CD8-positive, alpha-beta T cell (primary cell): ENCODE measurements at regions of chr15 and their contacts with region 1.

Region 1: GRCh38 chr15:81400640-81401236 is 26.7 kb upstream of the TMC3 start:
- DNase-seq: peak in 3 of 9 experiments; percentile 17 to 73 (median 65)
- ATAC-seq: peak; percentile 62
- H3K4me3 ChIP-seq: no peak overlapping the region
- H3K4me3 Mint-ChIP-seq: no peak overlapping the region
- H3K27ac ChIP-seq: no peak overlapping the region
- H3K27ac Mint-ChIP-seq: no peak overlapping the region
- H3K4me1 ChIP-seq: no peaks in the 10 kb centered on the region
- H3K4me1 Mint-ChIP-seq: peaks cover 2% of the 10 kb centered on the region
- H3K27me3 ChIP-seq: no peaks in the 10 kb centered on the region
- H3K27me3 Mint-ChIP-seq: no peaks in the 10 kb centered on the region
- CTCF ChIP-seq: peak; percentile 78

Region 2: DNA sequence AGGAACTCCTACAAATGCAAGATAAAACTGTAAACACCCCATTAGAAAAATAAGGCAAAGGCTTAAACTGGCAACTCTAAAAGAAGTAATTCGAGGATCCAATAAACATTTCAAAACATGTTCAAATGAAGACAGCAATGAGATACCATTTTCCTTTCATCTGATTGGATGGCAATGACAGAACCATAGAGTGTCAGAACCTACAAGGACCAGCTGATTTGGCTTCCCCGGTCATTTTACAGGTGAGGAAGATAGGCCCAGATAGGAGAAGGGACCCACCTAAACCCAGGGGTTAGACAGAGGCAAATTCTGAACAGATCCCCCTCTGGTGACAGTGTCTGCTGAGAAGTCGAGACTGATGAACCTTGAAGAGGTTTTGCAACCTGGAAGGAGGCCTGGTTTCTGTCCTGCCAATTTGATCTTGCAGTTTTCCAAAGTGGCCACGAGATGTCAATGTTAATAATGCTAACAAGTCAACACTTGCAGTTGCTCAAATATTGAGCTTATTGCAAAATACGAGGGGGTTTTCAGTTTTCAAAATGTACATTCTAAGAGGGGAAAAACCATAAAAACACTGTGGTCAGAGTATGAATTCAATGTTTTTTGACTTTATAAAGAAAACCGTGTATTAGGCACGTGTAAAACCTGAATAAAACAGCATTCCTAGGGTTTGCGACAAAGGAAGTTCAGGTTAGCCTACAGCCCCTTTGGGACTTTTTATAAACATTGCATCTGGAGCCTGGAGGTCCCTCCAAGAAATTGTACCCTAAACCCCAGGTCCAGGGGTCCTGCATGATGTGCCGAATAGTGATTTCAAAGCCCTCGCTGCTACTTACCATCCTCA is 245.1 kb before region 1 on chr15:
- CTCF ChIA-PET with region 1: interaction called, 11 read pairs
- POLR2A ChIA-PET with region 1: no interaction called
- intact Hi-C with region 1: loop called (anchors 1 to 5 kb)
- DNase-seq: peak in 4 of 9 experiments; percentile 11 to 50 (median 42)
- ATAC-seq: no peak
- H3K4me3 ChIP-seq: no peak overlapping the region
- H3K4me3 Mint-ChIP-seq: no peak overlapping the region
- H3K27ac ChIP-seq: no peak overlapping the region
- H3K27ac Mint-ChIP-seq: no peak overlapping the region
- H3K4me1 ChIP-seq: no peaks in the 10 kb centered on the region
- H3K4me1 Mint-ChIP-seq: no peaks in the 10 kb centered on the region
- H3K27me3 ChIP-seq: no peaks in the 10 kb centered on the region
- H3K27me3 Mint-ChIP-seq: peaks cover 4% of the 10 kb centered on the region
- CTCF ChIP-seq: peak; percentile 40

Region 3: DNA sequence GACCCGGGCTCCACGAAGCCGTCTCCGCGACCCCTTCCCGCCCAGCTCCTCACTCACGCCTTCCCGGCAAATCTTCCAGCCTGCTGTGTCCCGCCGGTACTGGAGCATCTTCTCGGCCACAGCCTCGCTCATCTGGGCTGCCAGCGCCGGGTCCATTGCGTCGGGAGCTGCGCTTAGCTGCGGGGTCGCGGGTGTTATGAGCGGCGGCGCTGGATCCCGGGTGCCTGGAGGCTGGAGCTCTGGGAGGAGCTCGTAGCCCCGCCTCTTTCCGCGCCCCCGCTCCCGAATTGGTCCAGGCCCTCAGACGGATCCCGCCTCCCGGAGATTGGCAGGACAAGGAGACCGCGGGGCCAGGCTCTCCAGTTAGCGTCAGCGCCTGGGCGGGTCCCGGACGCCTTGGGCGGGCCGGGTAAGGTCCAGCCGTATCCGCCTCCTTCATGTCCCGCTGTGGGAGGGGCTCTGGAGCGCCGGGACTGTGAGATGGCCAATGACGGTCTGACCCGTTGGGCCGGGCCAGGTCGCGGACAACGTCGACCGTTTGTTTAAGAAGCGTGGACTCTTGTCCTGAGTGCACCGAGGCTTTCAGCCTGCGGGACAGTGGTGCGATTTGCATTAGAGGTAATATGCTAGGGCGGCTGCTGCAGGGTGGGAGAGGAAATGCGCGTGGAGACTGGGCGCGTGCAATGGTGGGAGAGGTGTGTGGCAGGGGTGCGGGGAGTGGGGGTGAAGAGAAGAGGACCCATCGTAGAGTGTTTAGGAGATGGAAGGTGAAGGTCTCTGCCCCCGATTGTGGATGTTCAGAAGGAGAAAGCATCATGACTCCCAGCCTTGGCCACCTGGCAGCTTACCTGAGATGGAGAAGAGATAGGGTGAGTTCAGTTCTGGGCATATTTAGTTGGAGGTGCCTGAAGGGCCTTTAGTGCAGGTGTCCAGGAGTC is 76.5 kb before region 1 on chr15 and contains the start of gene STARD5:
- CTCF ChIA-PET with region 1: interaction called, 12 read pairs
- POLR2A ChIA-PET with region 1: no interaction called
- intact Hi-C with region 1: loop called (anchors 5 kb)
- DNase-seq: peak; percentile 85 to 97 (median 96)
- ATAC-seq: peak; percentile 96
- H3K4me3 ChIP-seq: peak within 1 kb of the TSS; percentile 82 to 93
- H3K4me3 Mint-ChIP-seq: peak within 1 kb of the TSS; percentile 95
- H3K27ac ChIP-seq: peak within 1 kb of the TSS; percentile 54 to 60
- H3K27ac Mint-ChIP-seq: peak within 1 kb of the TSS; percentile 93
- H3K4me1 ChIP-seq: peaks cover 27% of the 10 kb centered on the region
- H3K4me1 Mint-ChIP-seq: peaks cover 41% of the 10 kb centered on the region
- H3K27me3 ChIP-seq: no peaks in the 10 kb centered on the region
- H3K27me3 Mint-ChIP-seq: no peaks in the 10 kb centered on the region
- CTCF ChIP-seq: no peak
- total RNA-seq, gene STARD5: 13.6 to 14.3 TPM

Region 4: DNA sequence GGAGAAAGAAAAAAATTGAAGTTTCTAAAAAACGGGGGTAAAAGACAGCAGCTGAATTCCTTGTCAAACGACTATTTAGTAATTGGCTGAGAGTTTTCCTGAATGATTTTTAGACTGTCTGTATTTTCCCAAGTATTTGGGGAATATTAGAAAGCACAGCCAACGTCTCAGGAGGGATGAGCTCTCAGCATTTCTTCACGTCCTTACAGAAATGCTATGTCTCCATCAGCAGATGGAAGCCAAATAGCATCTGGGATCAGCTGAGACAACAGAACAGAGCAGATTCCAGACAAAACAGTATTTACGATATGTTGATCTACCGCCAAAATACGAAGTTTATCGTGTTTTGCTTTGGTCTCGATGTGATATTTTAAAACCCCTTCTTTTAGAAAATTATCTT is 21.5 kb before region 1 on chr15:
- CTCF ChIA-PET with region 1: interaction called, 11 read pairs
- POLR2A ChIA-PET with region 1: no interaction called
- intact Hi-C with region 1: no loop called
- DNase-seq: no peak
- ATAC-seq: no peak
- H3K4me3 ChIP-seq: no peak overlapping the region
- H3K4me3 Mint-ChIP-seq: no peak overlapping the region
- H3K27ac ChIP-seq: no peak overlapping the region
- H3K27ac Mint-ChIP-seq: no peak overlapping the region
- H3K4me1 ChIP-seq: no peaks in the 10 kb centered on the region
- H3K4me1 Mint-ChIP-seq: peaks cover 3% of the 10 kb centered on the region
- H3K27me3 ChIP-seq: no peaks in the 10 kb centered on the region
- H3K27me3 Mint-ChIP-seq: no peaks in the 10 kb centered on the region
- CTCF ChIP-seq: no peak